Aorta (tissue), 5 donors: ENCODE measurements at regions of chr11 and their contacts with region 1.

Region 1: GRCh38 chr11:22006901-22007300 is 186.0 kb upstream of the ANO5 start:
- DNase-seq: no peak
- ATAC-seq: no peak
- H3K4me3 ChIP-seq: no peak overlapping the region
- H3K27ac ChIP-seq: no peak overlapping the region
- H3K4me1 ChIP-seq: no peaks in the 10 kb centered on the region
- H3K27me3 ChIP-seq: no peaks in the 10 kb centered on the region

Region 2: GRCh38 chr11:21552911-21553310 is 454.0 kb before region 1 on chr11:
- intact Hi-C with region 1: no loop called
- DNase-seq: no peak
- ATAC-seq: no peak
- H3K4me3 ChIP-seq: no peak overlapping the region
- H3K27ac ChIP-seq: no peak overlapping the region
- H3K4me1 ChIP-seq: no peaks in the 10 kb centered on the region
- H3K27me3 ChIP-seq: no peaks in the 10 kb centered on the region

Region 3: GRCh38 chr11:21927628-21928027 is 79.3 kb before region 1 on chr11:
- intact Hi-C with region 1: no loop called
- DNase-seq: no peak
- ATAC-seq: no peak
- H3K4me3 ChIP-seq: no peak overlapping the region
- H3K27ac ChIP-seq: no peak overlapping the region
- H3K4me1 ChIP-seq: no peaks in the 10 kb centered on the region
- H3K27me3 ChIP-seq: no peaks in the 10 kb centered on the region

Region 4: DNA sequence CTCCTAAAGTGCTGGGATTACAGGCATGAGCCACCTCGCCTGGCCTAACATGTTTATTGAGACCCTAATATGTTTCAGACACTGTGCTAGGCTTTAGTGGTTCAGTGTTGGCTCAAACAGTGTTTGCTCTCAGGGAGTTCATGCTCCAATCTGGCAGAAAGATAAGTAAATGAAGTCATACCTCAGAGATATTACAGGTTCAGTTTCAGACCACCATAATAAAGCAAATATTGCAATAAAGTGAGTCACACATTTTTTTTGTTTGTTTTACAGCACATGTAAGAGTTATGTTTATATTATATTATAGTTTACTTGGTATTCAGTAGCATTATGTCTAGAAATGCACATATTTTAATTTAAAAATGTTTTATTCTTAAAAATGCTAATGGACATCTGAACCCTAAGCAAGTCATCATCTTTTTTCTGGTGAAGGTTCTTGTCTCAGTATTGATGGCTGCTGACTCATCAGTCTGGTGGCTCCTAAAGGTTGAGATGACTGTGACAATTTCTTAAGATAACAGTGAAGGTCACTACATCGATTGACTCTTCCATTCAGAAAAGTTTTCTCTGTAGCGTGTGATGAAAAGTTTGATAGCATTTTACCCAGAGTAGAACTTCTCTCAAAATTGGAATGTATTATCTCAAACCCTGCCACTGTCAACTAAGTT is 57.0 kb before region 1 on chr11:
- intact Hi-C with region 1: loop called in 1 of 2 experiments (anchors 10 kb)
- DNase-seq: no peak
- ATAC-seq: no peak
- H3K4me3 ChIP-seq: no peak overlapping the region
- H3K27ac ChIP-seq: no peak overlapping the region
- H3K4me1 ChIP-seq: peaks cover 0 to 3% of the 10 kb centered on the region in 2 donors
- H3K27me3 ChIP-seq: no peaks in the 10 kb centered on the region